ENCODE measurements at regions of chr19 and their contacts with region 1.

Region 1: DNA sequence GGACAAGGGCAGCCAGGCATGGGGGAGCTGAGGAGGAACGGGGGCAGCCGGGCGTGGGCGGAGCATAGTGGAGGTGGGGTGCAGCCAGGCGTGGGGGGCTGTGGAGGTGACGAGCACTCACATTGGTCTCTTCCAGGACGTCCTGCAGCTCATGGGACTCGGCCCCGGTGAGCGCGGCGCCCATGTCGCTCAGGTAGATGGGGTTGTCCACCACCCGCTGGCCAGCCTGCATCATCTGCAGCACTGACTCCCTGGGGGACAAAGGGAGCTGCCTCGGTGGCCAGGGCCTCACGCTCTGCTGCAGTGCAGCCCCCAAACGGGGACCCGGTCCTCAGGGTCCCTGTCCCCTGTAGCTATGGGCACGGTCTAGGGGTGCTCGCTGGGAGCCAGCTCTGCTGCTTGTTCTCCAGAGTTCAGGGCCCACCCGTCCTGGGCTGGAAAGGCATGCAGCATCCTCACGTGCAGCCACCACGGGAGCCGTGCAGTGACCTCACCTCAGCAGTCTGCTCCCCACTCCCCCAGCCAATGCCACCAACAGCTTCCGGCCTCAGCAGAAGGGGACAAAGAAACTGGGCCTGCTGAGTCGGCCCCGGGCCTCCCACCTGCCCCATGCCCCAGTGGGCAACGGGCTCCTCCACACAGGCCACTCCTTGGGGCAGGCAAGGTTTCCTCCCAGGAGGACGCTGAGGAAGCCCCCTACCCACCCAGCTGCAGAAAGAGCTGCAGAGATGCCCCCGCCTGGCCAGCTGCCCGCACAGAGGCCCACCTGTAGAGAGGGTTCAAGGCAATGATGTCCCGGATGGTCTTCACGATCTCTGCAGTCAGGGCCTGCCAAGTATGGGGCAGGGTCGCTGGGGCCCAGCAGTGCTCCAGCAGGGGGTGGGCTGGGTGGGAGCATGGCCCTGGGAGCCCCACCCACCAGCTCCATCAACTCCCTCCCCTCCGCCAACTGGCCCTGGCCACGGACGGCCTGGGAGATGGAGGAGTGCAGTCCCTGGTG is 12.1 kb downstream of the LONP1 start:
- DNase-seq: no peak
- ATAC-seq: peak; percentile 7
- H3K4me3 Mint-ChIP-seq: no peak overlapping the region
- H3K27ac Mint-ChIP-seq: no peak overlapping the region
- H3K4me1 Mint-ChIP-seq: no peaks in the 10 kb centered on the region
- H3K27me3 Mint-ChIP-seq: no peaks in the 10 kb centered on the region

Region 2: GRCh38 chr19:5719961-5720790 is 12.3 kb after region 1 on chr19 and contains the starts of genes CATSPERD and LONP1:
- CTCF ChIA-PET with region 1: no interaction called
- POLR2A ChIA-PET with region 1: interaction called, 11 read pairs
- DNase-seq: peak; percentile 99
- ATAC-seq: peak; percentile 90
- H3K4me3 Mint-ChIP-seq: peak within 1 kb of the TSS; percentile 95
- H3K27ac Mint-ChIP-seq: peak within 1 kb of the TSS; percentile 96
- H3K4me1 Mint-ChIP-seq: peaks cover 29% of the 10 kb centered on the region
- H3K27me3 Mint-ChIP-seq: peaks cover 2% of the 10 kb centered on the region
- total RNA-seq, gene CATSPERD: not detected
- total RNA-seq, gene LONP1: 114 to 129 TPM